ENCODE measurements at regions of chr11 and their contacts with region 1.

Region 1: DNA sequence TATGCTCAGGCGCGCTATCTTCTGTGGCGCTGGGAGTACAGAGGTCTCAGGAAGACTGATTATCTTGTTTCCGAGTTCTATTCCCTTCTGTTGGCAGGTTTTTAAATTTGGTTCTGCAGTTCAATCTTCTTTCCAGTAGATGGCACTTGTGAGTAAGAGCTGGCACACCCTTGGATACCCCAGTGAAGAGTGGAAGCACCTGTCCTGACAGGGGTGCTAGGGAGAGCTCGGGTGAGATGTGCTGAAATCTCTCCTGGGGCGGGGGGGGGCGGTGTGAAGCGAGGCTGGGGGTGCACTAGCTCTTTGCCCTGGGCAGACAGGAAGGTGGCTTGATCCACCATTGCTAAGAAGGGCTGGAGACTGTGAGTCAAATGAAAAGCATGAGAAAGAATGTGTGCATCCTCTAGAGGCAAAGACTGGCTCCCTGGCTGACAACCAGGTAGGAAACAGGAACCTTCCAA is 679.9 kb upstream of the CCDC179 start:
- DNase-seq: peak in 1 of 2 donors; percentile 18
- ATAC-seq: peak; percentile 74 to 91 (median 89)
- H3K4me3 ChIP-seq: no peak overlapping the region
- H3K4me3 Mint-ChIP-seq: peak overlapping the region; percentile 67
- H3K27ac ChIP-seq: no peak overlapping the region
- H3K27ac Mint-ChIP-seq: peak overlapping the region in 1 of 2 donors; percentile 51
- H3K4me1 ChIP-seq: peaks cover 11% of the 10 kb centered on the region
- H3K4me1 Mint-ChIP-seq: peaks cover 30 to 36% of the 10 kb centered on the region in 2 donors
- H3K27me3 ChIP-seq: no peaks in the 10 kb centered on the region
- H3K27me3 Mint-ChIP-seq: no peaks in the 10 kb centered on the region
- CTCF ChIP-seq: peak; percentile 67

Region 2: DNA sequence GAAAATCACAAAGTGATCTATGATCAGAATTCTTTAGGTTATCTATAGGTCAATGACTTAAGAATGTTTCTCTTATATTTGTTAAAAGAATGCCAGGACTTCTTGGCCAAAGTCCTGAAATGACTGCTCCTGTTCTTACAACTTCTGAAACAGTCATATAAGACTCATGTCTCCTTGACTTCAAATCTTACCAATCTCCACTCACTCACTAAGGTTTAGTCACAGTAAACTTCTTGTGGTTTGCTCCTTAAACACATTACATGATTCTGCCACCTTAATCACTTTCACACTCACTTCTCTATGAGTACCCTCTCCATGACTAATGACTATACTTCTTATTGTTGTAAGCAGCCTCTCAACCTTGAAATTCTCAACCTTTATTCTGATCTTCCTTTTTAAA is 31.1 kb before region 1 on chr11:
- intact Hi-C with region 1: no loop called
- DNase-seq: no peak
- ATAC-seq: peak in 2 of 3 donors; percentile 39 to 40
- H3K4me3 ChIP-seq: no peak overlapping the region
- H3K4me3 Mint-ChIP-seq: no peak overlapping the region
- H3K27ac ChIP-seq: no peak overlapping the region
- H3K27ac Mint-ChIP-seq: no peak overlapping the region
- H3K4me1 ChIP-seq: no peaks in the 10 kb centered on the region
- H3K4me1 Mint-ChIP-seq: no peaks in the 10 kb centered on the region
- H3K27me3 ChIP-seq: no peaks in the 10 kb centered on the region
- H3K27me3 Mint-ChIP-seq: peaks cover 0 to 10% of the 10 kb centered on the region in 2 donors
- CTCF ChIP-seq: no peak

Region 3: GRCh38 chr11:23556163-23556750 is 16.1 kb after region 1 on chr11:
- intact Hi-C with region 1: loop called (anchors 2 kb)
- DNase-seq: no peak
- ATAC-seq: peak; percentile 52 to 92 (median 66)
- H3K4me3 ChIP-seq: no peak overlapping the region
- H3K4me3 Mint-ChIP-seq: no peak overlapping the region
- H3K27ac ChIP-seq: no peak overlapping the region
- H3K27ac Mint-ChIP-seq: peak overlapping the region; percentile 35 to 62
- H3K4me1 ChIP-seq: peaks cover 11% of the 10 kb centered on the region
- H3K4me1 Mint-ChIP-seq: peaks cover 20 to 29% of the 10 kb centered on the region in 2 donors
- H3K27me3 ChIP-seq: no peaks in the 10 kb centered on the region
- H3K27me3 Mint-ChIP-seq: peaks cover 0 to 4% of the 10 kb centered on the region in 2 donors
- CTCF ChIP-seq: no peak

Region 4: DNA sequence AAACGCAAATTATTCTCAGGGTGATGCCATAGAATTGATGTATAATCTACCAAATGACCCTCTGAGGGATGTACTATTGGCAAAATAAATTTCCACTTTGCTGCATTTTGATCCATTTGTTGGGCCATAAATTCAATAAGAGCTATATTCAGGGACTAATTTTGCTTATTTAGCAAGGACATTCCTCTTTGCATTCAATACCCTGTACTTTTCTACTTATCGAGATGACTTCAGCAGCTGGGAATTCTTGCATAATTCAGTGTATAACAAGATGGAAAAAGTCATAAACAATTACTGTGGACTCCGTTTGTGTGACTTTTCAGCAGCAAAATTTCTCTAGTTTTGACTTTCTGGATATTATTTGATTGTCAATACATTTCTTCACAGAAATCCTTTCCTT is 64.8 kb after region 1 on chr11:
- intact Hi-C with region 1: no loop called
- DNase-seq: no peak
- ATAC-seq: no peak
- H3K4me3 ChIP-seq: no peak overlapping the region
- H3K4me3 Mint-ChIP-seq: no peak overlapping the region
- H3K27ac ChIP-seq: no peak overlapping the region
- H3K27ac Mint-ChIP-seq: no peak overlapping the region
- H3K4me1 ChIP-seq: no peaks in the 10 kb centered on the region
- H3K4me1 Mint-ChIP-seq: no peaks in the 10 kb centered on the region
- H3K27me3 ChIP-seq: no peaks in the 10 kb centered on the region
- H3K27me3 Mint-ChIP-seq: peaks cover 0 to 4% of the 10 kb centered on the region in 2 donors
- CTCF ChIP-seq: no peak

Region 5: DNA sequence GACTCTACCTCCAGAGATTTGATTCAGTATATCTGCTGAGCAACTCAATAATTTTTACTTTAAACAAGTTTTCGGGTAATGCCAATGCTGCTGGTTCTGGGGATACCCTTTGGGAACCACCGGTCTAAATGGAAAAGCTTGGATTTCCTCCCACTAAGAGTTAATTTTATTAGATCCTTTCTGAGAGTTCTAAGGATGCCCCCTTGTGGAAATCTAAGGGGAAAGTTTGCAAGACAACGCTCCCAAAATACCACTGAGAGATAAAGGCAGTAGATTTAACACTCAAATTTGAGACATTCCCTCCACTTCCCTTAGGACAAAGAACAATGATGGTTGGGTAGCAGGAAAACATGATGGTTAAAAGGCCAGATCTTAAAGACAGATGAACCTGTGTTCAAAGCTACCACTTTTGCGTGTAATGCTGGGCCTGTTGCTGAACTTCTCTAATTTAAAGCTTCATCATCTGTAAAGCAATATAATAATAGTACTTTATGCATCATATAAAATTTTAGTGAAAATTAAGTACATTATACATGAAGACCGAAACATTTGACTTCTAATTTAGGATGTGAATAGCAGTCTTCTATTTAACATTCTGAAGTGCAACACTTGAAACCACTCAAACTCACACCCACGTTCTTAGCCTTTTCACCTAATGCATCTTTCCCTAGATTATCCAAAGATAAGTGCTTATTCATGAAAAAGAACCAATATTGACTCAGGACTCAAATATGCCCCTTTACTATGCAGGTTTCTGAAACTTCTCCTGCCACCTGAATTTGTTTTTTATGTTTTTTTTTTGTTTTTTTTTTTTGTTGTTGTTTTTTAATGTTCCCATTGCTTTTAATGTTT is 846.6 kb after region 1 on chr11:
- intact Hi-C with region 1: loop called (anchors 2 kb)
- DNase-seq: no peak
- ATAC-seq: no peak
- H3K4me3 ChIP-seq: no peak overlapping the region
- H3K4me3 Mint-ChIP-seq: no peak overlapping the region
- H3K27ac ChIP-seq: no peak overlapping the region
- H3K27ac Mint-ChIP-seq: no peak overlapping the region
- H3K4me1 ChIP-seq: no peaks in the 10 kb centered on the region
- H3K4me1 Mint-ChIP-seq: peaks cover 5 to 12% of the 10 kb centered on the region in 2 donors
- H3K27me3 ChIP-seq: no peaks in the 10 kb centered on the region
- H3K27me3 Mint-ChIP-seq: no peaks in the 10 kb centered on the region
- CTCF ChIP-seq: peak; percentile 49

Measured in natural killer cell (primary cell).